ENCODE measurements at regions of chr1 and their contacts with region 1.

Region 1: DNA sequence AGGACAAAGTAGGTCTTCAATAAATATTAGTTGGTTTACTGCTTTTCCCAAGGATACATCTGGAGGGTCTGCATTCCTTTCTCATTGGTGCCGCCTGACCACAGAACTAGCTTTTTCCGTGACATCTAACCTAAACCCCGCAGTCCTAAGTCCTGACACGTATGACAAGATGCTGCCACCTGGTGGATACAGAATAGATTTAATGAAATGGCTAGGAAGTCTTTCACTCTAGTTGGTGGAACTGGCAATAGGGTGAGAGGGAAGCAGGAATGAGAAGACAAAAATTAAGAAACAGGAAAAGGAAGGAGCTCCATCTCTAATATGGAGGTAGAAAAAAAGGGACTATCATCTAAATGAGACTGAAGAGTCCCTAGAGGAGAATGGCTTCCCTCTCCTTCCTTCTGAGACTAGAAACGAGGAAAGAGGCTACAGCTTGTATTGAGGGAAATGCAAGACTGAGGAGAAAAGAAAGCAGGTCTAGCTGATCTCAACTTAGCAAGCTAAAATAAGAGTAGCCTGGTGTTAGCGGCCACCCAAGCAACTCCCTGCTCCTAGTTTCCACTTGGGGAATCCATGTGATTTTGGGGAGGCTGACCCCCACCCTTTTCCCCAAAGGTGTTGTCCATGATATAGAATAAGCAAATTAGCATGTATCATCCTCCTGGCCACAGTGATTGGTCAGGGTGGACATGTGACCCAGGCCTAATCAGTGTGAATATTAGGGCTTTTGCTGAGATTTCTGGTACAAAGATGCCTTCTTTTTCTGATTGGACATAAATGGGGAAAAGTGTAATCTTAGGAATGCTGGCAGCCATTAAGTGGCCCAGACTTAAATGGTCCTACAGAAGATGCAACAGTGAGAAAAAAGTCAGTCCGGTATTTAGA is 5.9 kb downstream of the RFX5 start:
- DNase-seq: peak in 3 of 5 donors; percentile 44 to 93 (median 88)
- H3K4me3 ChIP-seq: no peak overlapping the region
- H3K27ac ChIP-seq: no peak overlapping the region
- H3K4me1 ChIP-seq: peaks cover 3 to 8% (median 5%) of the 10 kb centered on the region in 3 donors
- H3K27me3 ChIP-seq: no peaks in the 10 kb centered on the region
- CTCF ChIP-seq: peak; percentile 77

Region 2: DNA sequence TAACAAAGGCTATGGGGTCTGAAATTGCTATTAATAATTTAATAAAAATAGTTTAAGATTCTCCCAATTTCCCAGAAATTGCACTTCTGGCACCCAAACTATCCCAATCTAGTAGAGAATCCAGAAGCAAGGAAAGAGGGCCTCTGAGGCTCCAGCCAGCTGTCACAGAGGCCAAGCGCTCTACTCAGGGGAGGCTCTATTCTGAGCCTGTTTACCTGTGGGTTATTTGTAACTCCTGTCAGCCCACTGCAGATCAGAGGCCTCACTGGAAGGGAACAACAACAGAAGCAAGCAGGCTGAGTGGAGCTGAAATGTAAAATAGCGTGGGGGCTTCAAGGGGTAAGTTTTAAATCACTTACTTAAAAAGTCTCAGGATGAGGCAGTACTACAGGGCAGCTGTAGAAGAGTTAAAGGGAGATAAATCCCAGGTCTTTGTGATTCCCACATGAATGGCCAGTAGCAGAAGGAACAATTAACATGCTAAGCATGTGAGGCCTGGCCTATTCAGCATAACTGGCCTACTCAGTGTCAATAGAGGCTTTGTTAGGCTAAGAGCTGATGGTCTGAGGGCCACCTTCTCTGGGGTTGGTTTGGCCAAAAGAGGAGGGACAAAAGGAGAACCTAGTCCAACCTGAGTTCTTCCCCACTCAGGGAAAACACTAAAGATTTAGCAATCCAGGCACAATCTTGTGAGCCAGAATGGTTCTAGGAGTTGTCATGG is 46.2 kb before region 1 on chr1:
- intact Hi-C with region 1: loop called (anchors 5 kb)
- DNase-seq: no peak
- H3K4me3 ChIP-seq: no peak overlapping the region
- H3K27ac ChIP-seq: no peak overlapping the region
- H3K4me1 ChIP-seq: no peaks in the 10 kb centered on the region
- H3K27me3 ChIP-seq: no peaks in the 10 kb centered on the region
- CTCF ChIP-seq: no peak

Measured in kidney (tissue), 22 donors.